ENCODE measurements at regions of chr15 and their contacts with region 1.

Region 1: DNA sequence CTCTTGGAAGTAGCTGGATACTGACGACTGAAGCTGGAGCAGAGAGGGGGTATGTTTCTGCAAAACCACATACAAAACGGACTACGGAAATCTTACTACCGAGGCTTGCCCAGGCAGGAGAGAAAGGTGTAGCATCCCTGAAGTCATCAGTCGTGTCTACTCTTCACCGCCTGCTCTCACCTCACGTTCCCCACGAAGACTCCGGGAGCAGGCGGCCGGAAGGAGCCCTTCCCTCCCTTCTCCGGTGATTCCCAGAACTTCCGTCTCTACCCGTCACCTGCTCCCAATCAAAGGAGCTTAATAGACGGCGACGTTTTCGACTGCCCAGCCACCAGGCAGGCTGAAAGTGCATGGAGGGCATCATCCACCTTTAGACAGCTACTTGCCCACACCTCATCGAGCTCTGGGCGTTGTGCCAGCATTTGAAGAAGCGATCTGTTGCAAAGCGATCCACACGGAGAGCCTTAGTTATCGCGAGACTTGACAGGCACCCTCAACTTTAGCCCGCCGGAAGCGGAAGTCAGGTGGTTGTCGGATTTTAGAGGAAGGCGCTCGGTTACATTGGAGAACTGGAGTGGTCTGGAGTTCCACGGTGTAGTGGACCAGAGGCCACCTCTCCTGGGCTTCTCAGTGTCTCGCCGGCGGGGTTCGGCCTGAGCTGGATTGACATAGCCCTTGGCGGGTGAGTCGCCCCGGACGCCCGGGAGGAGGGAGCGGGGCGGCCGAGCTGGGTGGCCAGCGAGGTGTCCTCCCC is at the start of gene RAMAC:
- DNase-seq: peak; percentile 93
- H3K4me3 Mint-ChIP-seq: peak within 1 kb of the TSS; percentile 83
- H3K27ac Mint-ChIP-seq: peak within 1 kb of the TSS; percentile 94
- H3K4me1 Mint-ChIP-seq: peaks cover 18% of the 10 kb centered on the region
- H3K27me3 Mint-ChIP-seq: no peaks in the 10 kb centered on the region
- CTCF ChIP-seq: no peak
- total RNA-seq, gene RAMAC: 31.5 and 34.5 TPM in 2 replicates

Region 2: DNA sequence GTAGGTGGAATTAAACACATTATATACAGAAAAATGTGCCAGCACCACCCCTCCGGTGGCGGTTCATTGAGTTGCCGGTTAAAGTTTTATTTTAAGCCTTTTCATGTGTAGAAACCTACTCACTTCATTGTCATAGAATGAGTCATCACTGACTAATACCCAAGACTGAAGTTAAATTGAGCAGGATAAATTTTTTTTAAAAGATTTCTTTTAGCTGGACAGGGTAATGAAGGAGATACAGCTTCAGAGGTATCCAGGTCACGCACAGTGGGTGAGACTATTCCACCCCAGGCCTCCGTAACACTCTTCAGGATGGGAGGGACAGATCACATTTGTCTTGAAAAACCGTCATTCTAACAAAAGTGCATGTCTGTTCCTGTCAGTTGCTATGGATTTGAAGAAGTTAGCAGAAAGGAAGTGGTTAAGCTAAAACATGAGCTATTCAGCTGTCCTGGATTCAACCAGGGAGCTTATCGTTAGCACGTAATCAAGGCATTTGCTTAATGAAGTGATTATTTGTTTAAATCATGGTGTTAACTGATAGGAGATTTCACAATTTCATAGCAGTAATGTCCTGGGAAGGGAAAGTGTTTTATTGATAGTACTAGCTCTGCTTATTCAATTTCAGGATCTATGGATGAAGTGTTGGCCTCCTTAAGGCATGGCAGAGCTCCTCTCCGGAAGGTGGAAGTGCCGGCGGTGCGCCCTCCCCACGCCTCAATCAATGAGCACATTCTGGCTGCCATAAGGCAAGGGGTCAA is 153.1 kb before region 1 on chr15:
- CTCF ChIA-PET with region 1: no interaction called
- intact Hi-C with region 1: loop called (anchors 10 kb)
- DNase-seq: peak; percentile 41
- H3K4me3 Mint-ChIP-seq: peak overlapping the region; percentile 31
- H3K27ac Mint-ChIP-seq: peak overlapping the region; percentile 82
- H3K4me1 Mint-ChIP-seq: peaks cover 25% of the 10 kb centered on the region
- H3K27me3 Mint-ChIP-seq: no peaks in the 10 kb centered on the region
- CTCF ChIP-seq: no peak

Region 3: GRCh38 chr15:82849556-82850512 is 136.0 kb before region 1 on chr15:
- CTCF ChIA-PET with region 1: interaction called, 5 read pairs
- intact Hi-C with region 1: loop called (anchors 2 kb)
- DNase-seq: peak; percentile 59
- H3K4me3 Mint-ChIP-seq: no peak overlapping the region
- H3K27ac Mint-ChIP-seq: no peak overlapping the region
- H3K4me1 Mint-ChIP-seq: no peaks in the 10 kb centered on the region
- H3K27me3 Mint-ChIP-seq: no peaks in the 10 kb centered on the region
- CTCF ChIP-seq: peak; percentile 59

Region 4: DNA sequence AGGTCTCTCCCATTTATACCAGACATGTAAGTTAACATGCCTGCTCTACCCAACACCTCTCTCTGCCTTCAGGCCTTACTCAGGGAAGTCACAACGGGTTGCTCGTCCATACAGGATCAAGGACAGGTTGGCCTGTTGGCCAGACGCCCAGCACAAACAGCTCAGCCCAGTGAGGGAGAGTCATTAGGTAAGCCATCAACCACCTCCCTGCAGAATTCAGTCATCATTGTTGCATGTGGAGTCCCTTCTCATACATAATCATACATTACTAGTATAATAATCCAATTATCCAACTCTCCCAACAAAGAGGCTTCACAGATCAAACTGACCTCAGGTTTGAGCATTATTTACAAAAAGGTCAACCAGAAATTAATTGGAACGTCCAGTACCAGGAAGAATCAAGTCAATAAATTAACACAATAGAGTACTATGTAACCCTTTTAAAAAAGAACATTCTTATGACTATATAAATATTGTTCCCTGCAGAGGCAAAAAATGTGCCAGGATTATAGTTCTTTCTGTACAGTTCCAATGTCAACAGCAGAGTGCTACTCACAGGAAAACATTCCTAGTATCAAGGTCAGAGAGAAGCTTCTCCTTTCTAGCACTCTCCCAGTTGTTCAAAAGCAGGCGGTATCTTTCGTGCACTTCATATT is 66.5 kb before region 1 on chr15:
- CTCF ChIA-PET with region 1: no interaction called
- intact Hi-C with region 1: loop called (anchors 5 kb)
- DNase-seq: peak; percentile 89
- H3K4me3 Mint-ChIP-seq: peak overlapping the region; percentile 6
- H3K27ac Mint-ChIP-seq: peak overlapping the region; percentile 79
- H3K4me1 Mint-ChIP-seq: peaks cover 50% of the 10 kb centered on the region
- H3K27me3 Mint-ChIP-seq: no peaks in the 10 kb centered on the region
- CTCF ChIP-seq: no peak

Region 5: DNA sequence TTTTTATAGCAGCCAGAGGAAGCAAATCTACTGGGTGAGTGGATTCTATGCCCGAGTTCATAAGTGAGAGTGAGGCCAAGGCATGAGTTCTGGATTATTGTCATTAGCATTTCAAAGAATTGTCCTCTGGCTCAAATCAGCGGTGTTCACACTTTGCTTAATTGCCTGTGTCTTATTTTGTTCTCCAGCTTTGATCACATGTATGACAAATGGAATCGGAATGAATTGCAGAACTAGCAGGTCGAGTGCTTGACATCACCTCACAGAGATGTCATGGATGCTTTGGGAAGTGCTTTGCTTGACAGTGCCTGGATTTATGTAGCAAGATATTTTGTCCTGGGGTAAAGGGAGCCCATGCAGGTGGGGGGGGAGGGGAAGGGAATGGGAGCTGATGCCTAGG is 529.3 kb after region 1 on chr15:
- CTCF ChIA-PET with region 1: no interaction called
- intact Hi-C with region 1: no loop called
- DNase-seq: no peak
- H3K4me3 Mint-ChIP-seq: no peak overlapping the region
- H3K27ac Mint-ChIP-seq: no peak overlapping the region
- H3K4me1 Mint-ChIP-seq: no peaks in the 10 kb centered on the region
- H3K27me3 Mint-ChIP-seq: peaks cover 66% of the 10 kb centered on the region
- CTCF ChIP-seq: no peak

Measured in Calu3 (cell line).